ENCODE measurements at regions of chr9 and their contacts with region 1.

Region 1: DNA sequence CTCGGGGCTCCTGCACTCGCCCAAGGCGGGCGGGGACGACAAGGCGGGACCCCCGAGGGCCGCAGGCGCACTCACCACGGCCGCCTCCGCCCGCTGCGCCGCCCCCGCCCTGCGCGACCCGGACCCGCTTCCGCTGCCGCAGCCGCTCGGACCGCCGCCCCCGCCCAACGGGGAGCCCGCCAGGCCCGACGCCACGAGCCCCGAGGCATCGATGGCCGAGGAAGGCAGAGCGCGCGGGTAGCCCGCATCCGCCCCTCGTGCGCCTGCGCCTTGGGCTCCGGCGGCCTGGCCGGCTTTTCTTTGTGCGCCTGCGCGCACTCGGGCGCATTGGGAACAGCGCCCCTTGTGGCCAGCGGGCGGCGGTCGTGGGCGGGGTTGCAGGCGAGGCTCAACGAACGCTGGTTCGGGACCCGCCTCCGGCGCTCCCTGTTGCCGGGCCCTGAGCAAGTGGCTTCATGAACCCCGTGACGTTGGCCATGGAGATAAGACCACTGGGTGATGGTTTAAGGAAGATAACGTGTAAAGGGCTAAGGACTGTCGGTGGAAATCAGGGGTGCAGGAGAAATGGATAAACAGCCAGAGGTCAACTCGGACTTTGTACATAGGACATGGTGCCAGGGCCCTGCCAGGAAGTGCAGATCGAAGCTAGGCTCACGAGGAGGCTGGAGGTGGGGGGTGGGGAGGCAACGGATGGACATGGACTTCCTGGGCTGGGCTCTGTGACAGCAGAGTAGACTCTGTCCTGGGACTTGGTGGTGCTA is at the starts of genes C8G and FBXW5:
- DNase-seq: peak; percentile 95 to 98
- ATAC-seq: peak; percentile 45 to 88 (median 67)
- H3K4me3 ChIP-seq: peak within 1 kb of the TSS; percentile 66 to 99 (median 92)
- H3K27ac ChIP-seq: peak within 1 kb of the TSS; percentile 94 to 99 (median 98)
- H3K4me1 ChIP-seq: peaks cover 24 to 74% (median 40%) of the 10 kb centered on the region in 9 donors
- H3K27me3 ChIP-seq: no peaks in the 10 kb centered on the region
- CTCF ChIP-seq: peak; percentile 94 to 100 (median 98)
- total RNA-seq, gene C8G: 1.2 to 10.0 (median 2.4) TPM
- total RNA-seq, gene FBXW5: 118 to 169 (median 138) TPM

Region 2: GRCh38 chr9:136790927-136791641 is 153.6 kb before region 1 on chr9 and contains the start of gene TMEM141:
- intact Hi-C with region 1: loop called in 6 of 10 experiments (anchors 1 to 5 kb)
- DNase-seq: peak; percentile 100
- ATAC-seq: peak; percentile 95 to 98 (median 95)
- H3K4me3 ChIP-seq: peak within 1 kb of the TSS; percentile 57 to 93 (median 77)
- H3K27ac ChIP-seq: peak within 1 kb of the TSS; percentile 88 to 98 (median 96)
- H3K4me1 ChIP-seq: peaks cover 13 to 65% (median 40%) of the 10 kb centered on the region in 9 donors
- H3K27me3 ChIP-seq: peaks cover 0 to 3% (median 0%) of the 10 kb centered on the region in 7 donors
- CTCF ChIP-seq: no peak
- total RNA-seq, gene TMEM141: 48.1 to 83.4 (median 61.8) TPM

Region 3: GRCh38 chr9:136849038-136849959 is 95.4 kb before region 1 on chr9 and contains the start of gene PHPT1:
- intact Hi-C with region 1: loop called in 8 of 10 experiments (anchors 1 to 5 kb)
- DNase-seq: peak; percentile 98
- ATAC-seq: peak; percentile 82 to 95 (median 91)
- H3K4me3 ChIP-seq: peak within 1 kb of the TSS; percentile 74 to 99 (median 82)
- H3K27ac ChIP-seq: peak within 1 kb of the TSS; percentile 77 to 96 (median 92)
- H3K4me1 ChIP-seq: peaks cover 18 to 53% (median 46%) of the 10 kb centered on the region in 9 donors
- H3K27me3 ChIP-seq: peaks cover 0 to 40% (median 17%) of the 10 kb centered on the region in 7 donors
- CTCF ChIP-seq: no peak
- total RNA-seq, gene PHPT1: 310 to 376 (median 327) TPM

Region 4: DNA sequence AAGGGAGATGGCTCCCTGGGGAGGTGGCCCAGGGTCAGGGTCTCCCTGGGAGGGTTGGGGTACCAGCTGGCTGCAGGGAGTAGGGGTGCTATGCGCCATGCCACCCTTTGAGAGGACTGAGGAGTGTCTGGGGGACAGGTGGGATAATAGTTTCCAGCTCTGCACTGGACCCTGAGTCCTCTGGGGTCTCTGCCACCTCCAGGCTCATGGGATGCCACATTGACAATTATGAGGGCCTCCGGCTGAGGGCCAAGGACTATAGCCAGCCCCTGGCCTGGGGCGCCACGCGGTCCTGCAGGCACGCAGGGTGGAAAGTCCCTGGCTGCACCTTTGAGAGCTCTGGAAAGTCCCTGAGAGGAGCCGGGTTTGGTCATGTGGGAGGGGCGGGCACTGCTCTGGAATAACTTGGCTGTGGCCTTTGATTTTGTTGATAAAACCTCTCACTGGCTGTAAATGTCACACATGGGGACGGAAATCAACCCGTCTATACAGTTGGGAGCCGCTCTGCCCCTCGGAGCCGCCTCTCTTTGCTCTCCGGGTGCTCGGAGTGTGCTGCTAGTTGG is 42.4 kb before region 1 on chr9:
- intact Hi-C with region 1: loop called in 2 of 10 experiments (anchors 5 kb)
- DNase-seq: peak; percentile 70 to 85
- ATAC-seq: peak; percentile 80 to 95 (median 91)
- H3K4me3 ChIP-seq: peak overlapping the region in 3 of 10 donors; percentile 2 to 10 (median 10)
- H3K27ac ChIP-seq: peak overlapping the region; percentile 50 to 90 (median 84)
- H3K4me1 ChIP-seq: peaks cover 19 to 53% (median 35%) of the 10 kb centered on the region in 9 donors
- H3K27me3 ChIP-seq: no peaks in the 10 kb centered on the region
- CTCF ChIP-seq: no peak

Region 5: GRCh38 chr9:136991993-136992818 is 47.5 kb after region 1 on chr9 and contains the start of gene PAXX:
- intact Hi-C with region 1: loop called in 5 of 10 experiments (anchors 5 kb)
- DNase-seq: peak; percentile 92 to 95
- ATAC-seq: peak; percentile 92 to 96 (median 94)
- H3K4me3 ChIP-seq: peak within 1 kb of the TSS; percentile 67 to 98 (median 90)
- H3K27ac ChIP-seq: peak within 1 kb of the TSS in 9 of 10 donors; percentile 80 to 94 (median 90)
- H3K4me1 ChIP-seq: peaks cover 8 to 55% (median 42%) of the 10 kb centered on the region in 9 donors
- H3K27me3 ChIP-seq: peaks cover 0 to 36% (median 17%) of the 10 kb centered on the region in 7 donors
- CTCF ChIP-seq: no peak
- total RNA-seq, gene PAXX: 12.7 to 29.5 (median 16.1) TPM

Measured in heart right ventricle (tissue), 16 donors.